ENCODE measurements at regions of chr17 and their contacts with region 1.

Region 1: DNA sequence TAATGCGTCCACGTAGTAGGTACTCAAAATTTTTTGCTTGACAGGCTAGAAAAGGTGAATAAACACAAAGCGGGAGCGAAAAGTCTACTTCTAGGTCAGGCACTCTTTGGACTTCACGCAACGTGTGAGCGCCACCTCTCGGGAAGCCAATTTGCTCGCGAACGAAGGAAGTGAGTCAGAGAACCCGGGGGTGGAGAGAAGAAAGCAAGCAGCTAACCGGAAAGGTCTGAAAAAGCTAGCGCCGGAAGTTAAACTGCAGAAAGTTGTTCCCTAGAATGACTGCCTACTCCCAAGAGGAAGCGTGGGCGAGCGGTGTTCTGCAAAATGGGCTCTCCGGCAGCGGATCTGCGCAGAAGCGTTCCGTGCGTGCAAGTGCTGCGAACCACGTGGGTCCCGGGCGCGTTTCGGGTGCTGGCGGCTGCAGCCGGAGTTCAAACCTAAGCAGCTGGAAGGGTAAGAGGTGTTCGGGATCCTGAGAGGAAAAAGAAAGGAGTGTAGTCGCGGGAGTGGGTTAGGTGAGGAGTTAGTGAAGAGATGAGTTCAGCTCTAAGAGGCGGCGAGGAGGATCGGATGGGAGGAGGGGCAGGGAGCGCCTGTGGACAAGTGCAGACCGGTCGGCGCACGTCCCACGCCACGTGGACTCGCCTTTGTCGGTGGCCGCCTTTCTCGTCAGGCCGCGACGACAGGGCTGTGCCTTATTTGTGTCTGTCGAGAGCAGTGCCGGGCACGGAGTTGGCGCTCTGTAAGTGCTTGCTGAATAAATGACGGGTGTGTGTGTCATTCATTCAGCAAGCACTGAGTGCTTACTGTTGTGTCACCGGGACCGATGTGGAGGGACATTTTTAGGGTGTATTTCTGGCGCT is at the start of gene NME1:
- DNase-seq: peak; percentile 95
- ATAC-seq: peak; percentile 98
- H3K4me3 ChIP-seq: peak within 1 kb of the TSS; percentile 91 to 99
- H3K27ac ChIP-seq: peak within 1 kb of the TSS; percentile 97
- H3K4me1 ChIP-seq: peaks cover 11% of the 10 kb centered on the region; the same call in 1 of the 2 replicates
- H3K27me3 ChIP-seq: no peaks in the 10 kb centered on the region
- CTCF ChIP-seq: peak; percentile 94
- total RNA-seq, gene NME1: 345 TPM

Region 2: DNA sequence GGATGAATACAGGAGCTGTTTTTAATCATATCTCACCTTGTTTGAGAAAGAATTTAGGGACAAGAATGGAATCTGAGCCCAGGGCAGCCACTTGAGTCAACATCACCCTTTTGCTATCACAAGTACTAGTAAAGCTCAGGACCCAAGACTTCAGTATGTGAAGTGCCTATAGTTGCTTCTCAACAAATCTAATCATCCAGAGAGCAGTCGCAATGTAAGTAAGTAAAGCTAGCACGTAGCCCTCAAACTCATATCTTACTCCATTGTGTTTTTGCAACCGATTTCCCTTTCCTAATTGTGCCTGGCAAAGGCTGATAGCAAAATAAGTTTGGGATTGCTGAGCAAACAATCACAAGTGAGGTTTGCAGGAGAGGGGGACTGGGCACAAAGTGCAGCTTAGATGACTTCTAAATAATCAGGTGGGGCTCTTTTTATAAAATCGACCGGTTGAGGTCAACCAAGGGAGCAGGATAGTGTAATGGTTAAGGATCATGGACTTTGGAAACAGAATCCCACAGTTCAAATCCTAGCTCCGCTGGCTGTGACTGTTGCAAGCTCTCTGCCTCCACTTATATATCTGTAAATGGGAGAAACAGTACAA is 300.3 kb before region 1 on chr17:
- CTCF ChIA-PET with region 1: no interaction called
- POLR2A ChIA-PET with region 1: no interaction called
- in situ Hi-C with region 1: no loop called
- intact Hi-C with region 1: loop called (anchors 10 kb)
- DNase-seq: no peak
- ATAC-seq: no peak
- H3K4me3 ChIP-seq: no peak overlapping the region
- H3K27ac ChIP-seq: no peak overlapping the region; the same call in 1 of the 2 replicates
- H3K4me1 ChIP-seq: peaks cover 11% of the 10 kb centered on the region; the same call in 1 of the 2 replicates
- H3K27me3 ChIP-seq: no peaks in the 10 kb centered on the region
- CTCF ChIP-seq: no peak

Region 3: DNA sequence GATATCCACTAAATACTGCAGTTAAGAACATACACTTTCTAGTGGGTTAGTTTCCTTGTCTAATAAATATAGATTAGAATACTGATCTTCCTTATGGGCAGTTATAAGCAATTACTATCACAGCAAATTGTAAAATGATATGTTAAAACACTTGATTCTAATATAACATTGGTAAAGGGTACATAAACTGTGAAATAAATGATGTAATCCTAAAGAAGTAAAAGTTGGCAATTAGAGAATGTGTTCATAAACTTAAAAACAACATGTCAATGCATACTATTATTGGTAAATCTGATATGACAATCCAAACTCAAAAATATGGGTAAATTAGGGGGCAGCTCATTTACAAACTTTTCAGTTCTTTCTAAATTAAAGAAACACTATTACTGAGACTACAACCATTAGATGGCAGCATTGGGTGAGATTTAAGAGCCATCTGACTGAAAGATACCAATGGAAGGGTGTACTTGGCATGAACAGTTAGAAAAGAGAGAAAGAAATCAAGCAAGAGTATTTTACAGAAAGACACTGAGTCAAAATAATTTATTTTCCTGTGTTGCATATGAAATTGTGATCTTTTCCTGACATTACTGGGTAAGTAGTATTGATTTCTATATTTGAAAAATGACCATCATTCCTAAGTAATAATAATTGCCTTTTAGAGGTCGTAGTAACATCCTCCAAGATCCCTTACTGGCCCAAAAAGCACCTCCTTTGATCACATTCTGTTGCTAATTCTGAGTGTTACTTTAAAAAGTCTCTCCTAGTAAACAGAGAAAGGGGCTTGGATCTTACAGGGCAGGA is 152.4 kb before region 1 on chr17:
- CTCF ChIA-PET with region 1: interaction called, 6 read pairs
- POLR2A ChIA-PET with region 1: no interaction called
- in situ Hi-C with region 1: no loop called
- intact Hi-C with region 1: loop called (anchors 1 kb)
- DNase-seq: peak; percentile 42
- ATAC-seq: peak; percentile 82
- H3K4me3 ChIP-seq: no peak overlapping the region
- H3K27ac ChIP-seq: no peak overlapping the region
- H3K4me1 ChIP-seq: no peaks in the 10 kb centered on the region
- H3K27me3 ChIP-seq: no peaks in the 10 kb centered on the region
- CTCF ChIP-seq: peak; percentile 61; the same call in 1 of the 2 replicates

Region 4: GRCh38 chr17:51103451-51103850 is 50.0 kb before region 1 on chr17:
- CTCF ChIA-PET with region 1: no interaction called
- POLR2A ChIA-PET with region 1: no interaction called
- in situ Hi-C with region 1: no loop called
- intact Hi-C with region 1: no loop called
- DNase-seq: no peak
- ATAC-seq: no peak
- H3K4me3 ChIP-seq: no peak overlapping the region
- H3K27ac ChIP-seq: no peak overlapping the region
- H3K4me1 ChIP-seq: no peaks in the 10 kb centered on the region
- H3K27me3 ChIP-seq: no peaks in the 10 kb centered on the region
- CTCF ChIP-seq: no peak

Region 5: GRCh38 chr17:51120739-51121617 is 32.5 kb before region 1 on chr17 and contains the start of gene SPAG9:
- CTCF ChIA-PET with region 1: interaction called, 18 read pairs
- POLR2A ChIA-PET with region 1: interaction called, 14 read pairs
- in situ Hi-C with region 1: no loop called
- intact Hi-C with region 1: loop called (anchors 1 kb)
- DNase-seq: peak; percentile 76
- ATAC-seq: peak; percentile 90
- H3K4me3 ChIP-seq: peak within 1 kb of the TSS; percentile 84 to 92
- H3K27ac ChIP-seq: peak within 1 kb of the TSS; percentile 97
- H3K4me1 ChIP-seq: peaks cover 27% of the 10 kb centered on the region
- H3K27me3 ChIP-seq: no peaks in the 10 kb centered on the region
- CTCF ChIP-seq: no peak
- total RNA-seq, gene SPAG9: 144 TPM

Region 6: DNA sequence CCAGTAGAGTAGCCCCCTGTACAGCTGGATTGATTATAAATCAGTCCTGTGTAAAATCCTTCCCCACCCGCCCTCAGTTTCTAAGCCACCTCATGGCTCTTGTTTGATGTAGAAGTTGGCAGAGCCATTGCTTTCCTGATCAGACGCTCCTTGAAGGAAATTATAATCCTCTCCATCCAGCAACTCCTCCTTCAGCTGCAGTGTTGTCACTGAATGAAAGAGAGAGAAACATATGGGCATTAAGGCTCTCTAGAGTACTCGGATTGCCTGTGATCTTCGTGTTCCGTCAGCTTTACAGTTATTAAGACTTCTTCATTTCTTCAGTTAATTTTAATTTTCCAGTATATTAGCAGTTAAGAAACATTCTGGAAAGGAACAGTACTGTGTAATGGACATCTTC is 27.0 kb after region 1 on chr17:
- CTCF ChIA-PET with region 1: no interaction called
- POLR2A ChIA-PET with region 1: no interaction called
- in situ Hi-C with region 1: no loop called
- intact Hi-C with region 1: no loop called
- DNase-seq: no peak
- ATAC-seq: no peak
- H3K4me3 ChIP-seq: no peak overlapping the region
- H3K27ac ChIP-seq: no peak overlapping the region
- H3K4me1 ChIP-seq: no peaks in the 10 kb centered on the region
- H3K27me3 ChIP-seq: no peaks in the 10 kb centered on the region
- CTCF ChIP-seq: no peak